PC-3 (cell line): ENCODE measurements at regions of chr13 and their contacts with region 1.

Region 1: DNA sequence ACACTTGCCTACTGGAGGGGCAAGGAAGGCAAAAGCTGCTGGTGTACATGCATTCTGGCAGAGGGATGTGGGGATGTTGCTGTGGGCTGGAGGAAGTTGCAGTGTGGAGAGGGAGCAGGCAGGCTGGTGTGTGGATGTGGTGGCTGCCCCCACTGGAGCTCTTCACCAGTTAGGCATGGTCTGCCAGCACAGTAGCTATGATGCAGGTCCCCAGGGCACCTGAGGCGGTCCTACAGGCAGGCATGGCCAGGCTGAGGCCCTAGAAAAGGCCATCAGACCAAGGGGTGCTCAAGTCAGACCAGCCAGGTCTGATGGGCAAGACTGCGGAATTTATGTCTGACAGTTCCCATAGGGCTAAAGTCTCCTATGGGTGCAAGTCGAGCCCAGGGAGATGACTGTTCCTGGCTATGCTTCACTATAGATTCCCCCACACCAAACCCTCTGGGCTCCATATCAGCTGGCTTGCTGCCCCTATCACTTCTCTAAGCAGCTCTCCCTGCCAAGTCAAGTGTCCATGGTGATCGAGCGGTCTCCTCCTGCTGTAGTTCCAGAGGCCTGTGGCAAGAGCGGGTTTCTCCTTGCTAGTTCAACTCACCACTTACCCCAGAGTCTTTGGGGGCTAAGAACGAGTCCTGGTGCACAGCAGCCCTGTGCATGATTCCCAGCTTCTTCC is 473.1 kb downstream of the TDRD3 start:
- DNase-seq: no peak
- ATAC-seq: no peak
- H3K4me3 ChIP-seq: no peak overlapping the region
- H3K27ac ChIP-seq: no peak overlapping the region
- H3K4me1 ChIP-seq: peaks cover 16% of the 10 kb centered on the region
- H3K27me3 ChIP-seq: no peaks in the 10 kb centered on the region
- CTCF ChIP-seq: no peak

Region 2: GRCh38 chr13:60759499-60759898 is 110.6 kb before region 1 on chr13:
- CTCF ChIA-PET with region 1: no interaction called
- POLR2A ChIA-PET with region 1: no interaction called
- intact Hi-C with region 1: loop called (anchors 5 kb)
- DNase-seq: peak; percentile 59
- ATAC-seq: peak; percentile 49
- H3K4me3 ChIP-seq: no peak overlapping the region
- H3K27ac ChIP-seq: no peak overlapping the region
- H3K4me1 ChIP-seq: peaks cover 13% of the 10 kb centered on the region; the same call in 1 of the 2 replicates
- H3K27me3 ChIP-seq: no peaks in the 10 kb centered on the region
- CTCF ChIP-seq: no peak

Region 3: GRCh38 chr13:60850526-60850925 is 19.6 kb before region 1 on chr13:
- CTCF ChIA-PET with region 1: no interaction called
- POLR2A ChIA-PET with region 1: no interaction called
- intact Hi-C with region 1: no loop called
- DNase-seq: no peak
- ATAC-seq: no peak
- H3K4me3 ChIP-seq: no peak overlapping the region
- H3K27ac ChIP-seq: no peak overlapping the region
- H3K4me1 ChIP-seq: no peaks in the 10 kb centered on the region
- H3K27me3 ChIP-seq: no peaks in the 10 kb centered on the region
- CTCF ChIP-seq: no peak

Region 4: GRCh38 chr13:60957816-60958215 is 87.7 kb after region 1 on chr13:
- CTCF ChIA-PET with region 1: no interaction called
- POLR2A ChIA-PET with region 1: no interaction called
- intact Hi-C with region 1: loop called (anchors 1 kb)
- DNase-seq: no peak
- ATAC-seq: no peak
- H3K4me3 ChIP-seq: no peak overlapping the region
- H3K27ac ChIP-seq: no peak overlapping the region
- H3K4me1 ChIP-seq: peaks cover 12% of the 10 kb centered on the region; the same call in 1 of the 2 replicates
- H3K27me3 ChIP-seq: no peaks in the 10 kb centered on the region
- CTCF ChIP-seq: 0 out of 2 replicates have a peak, but pooled peaks have one; percentile 11

Region 5: GRCh38 chr13:60986301-60986700 is 116.2 kb after region 1 on chr13:
- CTCF ChIA-PET with region 1: no interaction called
- POLR2A ChIA-PET with region 1: no interaction called
- intact Hi-C with region 1: no loop called
- DNase-seq: no peak
- ATAC-seq: no peak
- H3K4me3 ChIP-seq: no peak overlapping the region
- H3K27ac ChIP-seq: no peak overlapping the region
- H3K4me1 ChIP-seq: no peaks in the 10 kb centered on the region
- H3K27me3 ChIP-seq: no peaks in the 10 kb centered on the region
- CTCF ChIP-seq: no peak

Region 6: GRCh38 chr13:61204025-61204424 is 333.9 kb after region 1 on chr13:
- CTCF ChIA-PET with region 1: no interaction called
- POLR2A ChIA-PET with region 1: no interaction called
- intact Hi-C with region 1: no loop called
- DNase-seq: no peak
- ATAC-seq: no peak
- H3K4me3 ChIP-seq: no peak overlapping the region
- H3K27ac ChIP-seq: no peak overlapping the region
- H3K4me1 ChIP-seq: no peaks in the 10 kb centered on the region
- H3K27me3 ChIP-seq: no peaks in the 10 kb centered on the region
- CTCF ChIP-seq: no peak

Region 7: GRCh38 chr13:62375653-62376052 is 1505.6 kb after region 1 on chr13:
- CTCF ChIA-PET with region 1: no interaction called
- POLR2A ChIA-PET with region 1: no interaction called
- intact Hi-C with region 1: no loop called
- DNase-seq: no peak
- ATAC-seq: no peak
- H3K4me3 ChIP-seq: no peak overlapping the region
- H3K27ac ChIP-seq: no peak overlapping the region
- H3K4me1 ChIP-seq: no peaks in the 10 kb centered on the region
- H3K27me3 ChIP-seq: no peaks in the 10 kb centered on the region
- CTCF ChIP-seq: no peak